Sigmoid colon (tissue), 7 donors: ENCODE measurements at regions of chr4 and their contacts with region 1.

Region 1: DNA sequence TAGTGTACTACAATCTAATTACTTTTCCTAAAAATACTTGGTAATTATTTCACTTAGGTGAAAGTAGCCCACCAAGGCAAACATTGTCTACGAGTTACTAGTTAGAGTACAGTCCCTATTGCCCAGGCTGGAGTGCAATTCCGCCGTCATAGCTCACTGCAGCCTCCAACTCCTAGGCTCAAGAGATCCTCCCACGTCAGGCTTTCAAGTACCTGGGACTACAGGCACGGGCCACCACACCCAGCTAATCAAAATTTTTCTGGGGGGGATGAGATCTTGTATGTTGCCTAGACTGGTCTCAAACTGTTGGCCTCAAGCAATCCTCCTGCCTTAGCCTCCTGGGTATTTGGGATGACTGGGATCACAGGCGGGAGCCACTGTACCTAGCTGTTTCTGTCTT is 21.9 kb downstream of the FAM193A start:
- DNase-seq: no peak
- H3K4me3 ChIP-seq: no peak overlapping the region
- H3K27ac ChIP-seq: no peak overlapping the region
- H3K4me1 ChIP-seq: peaks cover 0 to 30% (median 16%) of the 10 kb centered on the region in 4 donors
- H3K27me3 ChIP-seq: no peaks in the 10 kb centered on the region
- CTCF ChIP-seq: no peak
- EP300 ChIP-seq: no peak
- POLR2A ChIP-seq: no peak

Region 2: DNA sequence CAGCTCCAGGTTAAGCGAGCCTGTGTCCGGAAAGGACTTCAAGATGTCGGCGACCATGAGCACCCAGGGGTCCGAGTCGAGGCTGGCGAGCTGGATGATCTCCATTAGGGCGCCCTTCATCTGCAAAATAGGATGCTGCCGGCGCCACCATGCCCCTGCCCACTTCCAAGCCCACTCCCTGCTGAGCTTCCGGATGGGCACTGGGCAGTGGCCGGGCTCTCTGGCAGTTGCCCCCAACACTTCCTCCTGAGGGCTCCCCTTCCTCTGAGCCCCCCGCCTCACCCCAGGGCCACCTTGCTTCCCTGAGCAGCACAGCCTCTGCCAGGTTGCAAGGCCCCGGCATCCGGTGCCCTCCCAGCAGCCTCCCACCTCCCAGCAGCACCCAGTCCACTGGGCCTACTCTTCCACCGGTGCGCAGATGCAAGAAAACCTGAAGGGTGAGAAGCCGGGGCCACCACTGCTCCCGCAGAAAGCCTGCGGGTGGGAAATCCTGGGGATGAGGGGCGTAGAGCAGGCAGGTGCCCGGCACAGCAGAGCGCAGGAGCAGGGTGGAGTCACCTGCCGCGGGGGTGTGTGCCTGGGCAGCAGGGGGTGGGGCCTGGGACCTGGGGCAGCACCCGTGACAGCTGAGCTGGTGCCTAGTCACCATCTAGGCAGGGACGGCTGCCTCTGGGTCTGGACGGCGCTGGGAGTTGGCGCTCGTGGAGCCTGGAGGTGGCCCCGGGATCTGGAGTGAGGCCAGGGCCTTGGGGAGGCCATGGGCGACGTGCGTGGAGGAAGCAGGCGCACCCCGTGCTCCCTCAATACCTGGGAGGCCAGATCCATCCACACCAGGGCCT is 566.5 kb before region 1 on chr4:
- intact Hi-C with region 1: no loop called
- DNase-seq: no peak
- H3K4me3 ChIP-seq: no peak overlapping the region
- H3K27ac ChIP-seq: no peak overlapping the region
- H3K4me1 ChIP-seq: peaks cover 0 to 4% (median 0%) of the 10 kb centered on the region in 4 donors
- H3K27me3 ChIP-seq: no peaks in the 10 kb centered on the region
- CTCF ChIP-seq: no peak
- EP300 ChIP-seq: no peak
- POLR2A ChIP-seq: no peak

Region 3: GRCh38 chr4:2591189-2591588 is 32.9 kb after region 1 on chr4:
- intact Hi-C with region 1: loop called (anchors 5 kb)
- DNase-seq: no peak
- H3K4me3 ChIP-seq: no peak overlapping the region
- H3K27ac ChIP-seq: no peak overlapping the region
- H3K4me1 ChIP-seq: peaks cover 0 to 88% (median 77%) of the 10 kb centered on the region in 4 donors
- H3K27me3 ChIP-seq: no peaks in the 10 kb centered on the region
- CTCF ChIP-seq: no peak
- EP300 ChIP-seq: no peak
- POLR2A ChIP-seq: no peak